ENCODE measurements at regions of chr1 and their contacts with region 1.

Region 1: GRCh38 chr1:187443939-187444338 is 615.2 kb downstream of the PLA2G4A start:
- DNase-seq: no peak
- ATAC-seq: no peak
- H3K4me3 ChIP-seq: no peak overlapping the region
- H3K27ac ChIP-seq: no peak overlapping the region
- H3K4me1 ChIP-seq: no peaks in the 10 kb centered on the region
- H3K27me3 ChIP-seq: no peaks in the 10 kb centered on the region
- CTCF ChIP-seq: no peak

Region 2: DNA sequence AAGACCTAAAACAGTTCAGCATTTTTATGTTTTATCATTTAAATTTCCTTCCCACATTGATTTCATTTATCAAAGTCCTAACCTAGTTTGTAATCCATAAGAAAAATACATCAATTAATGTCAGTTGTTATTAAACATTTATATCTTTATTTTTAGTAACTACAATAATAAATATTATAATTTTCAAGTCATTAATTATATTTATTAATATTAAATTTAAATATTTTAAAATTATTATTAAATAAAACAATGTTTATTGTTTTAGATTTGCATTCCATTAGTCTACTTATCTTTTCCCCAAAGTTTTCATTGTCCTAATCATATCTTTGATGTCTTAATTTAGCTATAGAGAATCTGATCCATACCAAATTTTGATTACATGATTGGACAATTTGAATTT is 246.3 kb before region 1 on chr1:
- CTCF ChIA-PET with region 1: no interaction called
- POLR2A ChIA-PET with region 1: no interaction called
- in situ Hi-C with region 1: no loop called
- intact Hi-C with region 1: loop called (anchors 5 kb)
- DNase-seq: no peak
- ATAC-seq: no peak
- H3K4me3 ChIP-seq: no peak overlapping the region
- H3K27ac ChIP-seq: no peak overlapping the region
- H3K4me1 ChIP-seq: no peaks in the 10 kb centered on the region
- H3K27me3 ChIP-seq: no peaks in the 10 kb centered on the region
- CTCF ChIP-seq: no peak

Region 3: GRCh38 chr1:187537936-187538335 is 94.0 kb after region 1 on chr1:
- CTCF ChIA-PET with region 1: no interaction called
- POLR2A ChIA-PET with region 1: no interaction called
- in situ Hi-C with region 1: no loop called
- intact Hi-C with region 1: no loop called
- DNase-seq: no peak
- ATAC-seq: no peak
- H3K4me3 ChIP-seq: no peak overlapping the region
- H3K27ac ChIP-seq: no peak overlapping the region
- H3K4me1 ChIP-seq: no peaks in the 10 kb centered on the region
- H3K27me3 ChIP-seq: no peaks in the 10 kb centered on the region
- CTCF ChIP-seq: no peak